A549 (cell line): ENCODE measurements at regions of chr7 and their contacts with region 1.

Region 1: GRCh38 chr7:2612445-2613097 is 19.2 kb upstream of the TTYH3 start:
- DNase-seq: no peak
- ATAC-seq: peak in 1 of 2 experiments; percentile 58; a peak in 3 of 6 replicates
- H3K4me3 ChIP-seq: no peak overlapping the region
- H3K27ac ChIP-seq: no peak overlapping the region
- H3K4me1 ChIP-seq: no peaks in the 10 kb centered on the region
- CTCF ChIP-seq: no peak
- EP300 ChIP-seq: no peak
- POLR2A ChIP-seq: no peak
- RAD21 ChIP-seq: no peak

Region 2: GRCh38 chr7:2602406-2603043 is 10.0 kb before region 1 on chr7:
- CTCF ChIA-PET with region 1: interaction called, 11 read pairs
- POLR2A ChIA-PET with region 1: no interaction called
- DNase-seq: no peak
- ATAC-seq: no peak; a peak in 1 of 6 replicates
- H3K4me3 ChIP-seq: no peak overlapping the region
- H3K27ac ChIP-seq: no peak overlapping the region
- H3K4me1 ChIP-seq: no peaks in the 10 kb centered on the region
- CTCF ChIP-seq: no peak
- EP300 ChIP-seq: no peak
- POLR2A ChIP-seq: no peak
- RAD21 ChIP-seq: no peak

Region 3: GRCh38 chr7:2641406-2642393 is 29.1 kb after region 1 on chr7:
- CTCF ChIA-PET with region 1: no interaction called
- POLR2A ChIA-PET with region 1: no interaction called
- DNase-seq: no peak
- ATAC-seq: peak in 1 of 2 experiments; percentile 5; a peak in 2 of 6 replicates
- H3K4me3 ChIP-seq: no peak overlapping the region
- H3K27ac ChIP-seq: peak overlapping the region in 1 of 2 experiments; percentile 65; a peak in 2 of 6 replicates
- H3K4me1 ChIP-seq: peaks cover 32% of the 10 kb centered on the region
- CTCF ChIP-seq: no peak
- EP300 ChIP-seq: no peak
- POLR2A ChIP-seq: no peak
- RAD21 ChIP-seq: no peak